ENCODE measurements at regions of chr14 and their contacts with region 1.

Region 1: GRCh38 chr14:88868558-88869159 is 44.2 kb downstream of the TTC8 start:
- DNase-seq: peak in 1 of 35 experiments; percentile 32
- ATAC-seq: no peak
- H3K4me3 ChIP-seq: no peak overlapping the region
- H3K4me3 Mint-ChIP-seq: no peak overlapping the region
- H3K27ac ChIP-seq: no peak overlapping the region
- H3K27ac Mint-ChIP-seq: no peak overlapping the region
- H3K4me1 ChIP-seq: no peaks in the 10 kb centered on the region
- H3K4me1 Mint-ChIP-seq: no peaks in the 10 kb centered on the region
- H3K27me3 ChIP-seq: no peaks in the 10 kb centered on the region
- H3K27me3 Mint-ChIP-seq: no peaks in the 10 kb centered on the region

Region 2: GRCh38 chr14:88667555-88668273 is 200.9 kb before region 1 on chr14:
- CTCF ChIA-PET with region 1: interaction called, 8 to 19 read pairs
- POLR2A ChIA-PET with region 1: no interaction called
- DNase-seq: peak in 32 of 35 experiments; percentile 5 to 78 (median 22)
- ATAC-seq: peak; percentile 39 to 74 (median 66)
- H3K4me3 ChIP-seq: no peak overlapping the region
- H3K4me3 Mint-ChIP-seq: no peak overlapping the region
- H3K27ac ChIP-seq: no peak overlapping the region
- H3K27ac Mint-ChIP-seq: peak overlapping the region in 1 of 2 donors; percentile 41
- H3K4me1 ChIP-seq: peaks cover 0 to 3% of the 10 kb centered on the region in 2 experiments
- H3K4me1 Mint-ChIP-seq: peaks cover 0 to 6% (median 3%) of the 10 kb centered on the region in 3 donors
- H3K27me3 ChIP-seq: no peaks in the 10 kb centered on the region
- H3K27me3 Mint-ChIP-seq: peaks cover 0 to 1% of the 10 kb centered on the region in 2 donors

Measured in T-cell (primary cell).